Caco-2 (cell line): ENCODE measurements at regions of chr19 and their contacts with region 1.

Region 1: GRCh38 chr19:48391107-48391986 is at the start of gene KDELR1:
- DNase-seq: peak; percentile 75 to 86
- H3K4me3 ChIP-seq: peak within 1 kb of the TSS; percentile 70
- H3K4me3 Mint-ChIP-seq: peak within 1 kb of the TSS; percentile 80
- H3K27ac Mint-ChIP-seq: peak within 1 kb of the TSS; percentile 61
- H3K4me1 ChIP-seq: peaks cover 27% of the 10 kb centered on the region
- H3K4me1 Mint-ChIP-seq: peaks cover 33% of the 10 kb centered on the region
- H3K27me3 ChIP-seq: no peaks in the 10 kb centered on the region
- H3K27me3 Mint-ChIP-seq: no peaks in the 10 kb centered on the region
- CTCF ChIP-seq: peak; percentile 95 to 98
- total RNA-seq, gene KDELR1: 375 and 381 TPM in 2 replicates

Region 2: DNA sequence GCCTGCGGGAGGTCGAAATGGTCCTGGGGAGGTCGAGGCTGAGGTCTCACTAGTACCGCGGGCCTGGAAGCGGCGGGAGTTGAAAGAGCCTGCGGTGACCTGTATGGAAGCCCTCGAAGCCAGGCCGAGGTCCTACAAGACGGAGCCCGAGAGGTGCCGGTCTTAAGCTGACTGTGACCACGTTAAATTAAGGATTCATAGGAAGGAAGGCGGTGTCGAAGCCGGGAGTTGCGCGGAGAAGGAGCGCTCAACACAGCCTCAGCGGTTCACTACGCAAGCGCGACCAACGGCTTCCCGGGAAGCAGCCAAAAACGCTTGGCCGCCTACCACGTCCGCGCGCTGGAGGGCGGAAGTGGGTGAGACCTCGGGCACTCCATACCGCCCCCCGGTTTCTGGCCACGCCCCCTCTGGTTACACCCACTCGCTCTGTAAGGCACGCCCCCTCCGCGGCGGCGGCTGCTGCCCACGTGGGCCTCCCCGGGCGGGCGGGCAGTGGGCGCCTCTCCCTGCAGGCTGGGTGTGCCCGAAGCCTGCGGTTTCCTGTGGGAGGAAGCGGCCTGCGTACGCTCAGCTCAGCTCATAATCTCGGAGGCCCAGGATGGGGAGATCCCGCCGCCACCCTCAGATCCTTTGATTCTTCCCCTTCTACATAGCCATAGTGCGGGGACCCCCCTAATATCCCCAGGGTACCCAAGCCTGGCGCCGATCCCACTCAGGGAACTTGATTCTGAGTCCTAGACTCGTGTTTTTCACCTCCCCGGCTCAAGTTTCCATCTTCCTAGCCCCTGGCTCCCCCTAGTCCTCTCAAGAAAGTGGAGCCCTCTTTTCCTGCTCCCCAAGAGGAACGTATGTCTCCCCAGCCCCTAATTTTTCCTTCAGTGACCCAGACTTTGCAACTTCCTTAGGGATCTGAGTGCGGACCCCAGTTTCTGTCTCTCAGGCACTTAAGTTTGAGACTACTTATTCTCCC is 69.4 kb before region 1 on chr19:
- CTCF ChIA-PET with region 1: interaction called, 8 read pairs
- POLR2A ChIA-PET with region 1: no interaction called
- intact Hi-C with region 1: loop called (anchors 2 kb)
- DNase-seq: peak; percentile 98 to 99
- H3K4me3 ChIP-seq: peak overlapping the region; percentile 93
- H3K4me3 Mint-ChIP-seq: peak overlapping the region; percentile 96
- H3K27ac Mint-ChIP-seq: peak overlapping the region; percentile 95
- H3K4me1 ChIP-seq: peaks cover 25% of the 10 kb centered on the region
- H3K4me1 Mint-ChIP-seq: peaks cover 34% of the 10 kb centered on the region
- H3K27me3 ChIP-seq: no peaks in the 10 kb centered on the region
- H3K27me3 Mint-ChIP-seq: no peaks in the 10 kb centered on the region
- CTCF ChIP-seq: peak in 1 of 2 experiments; percentile 15

Region 3: DNA sequence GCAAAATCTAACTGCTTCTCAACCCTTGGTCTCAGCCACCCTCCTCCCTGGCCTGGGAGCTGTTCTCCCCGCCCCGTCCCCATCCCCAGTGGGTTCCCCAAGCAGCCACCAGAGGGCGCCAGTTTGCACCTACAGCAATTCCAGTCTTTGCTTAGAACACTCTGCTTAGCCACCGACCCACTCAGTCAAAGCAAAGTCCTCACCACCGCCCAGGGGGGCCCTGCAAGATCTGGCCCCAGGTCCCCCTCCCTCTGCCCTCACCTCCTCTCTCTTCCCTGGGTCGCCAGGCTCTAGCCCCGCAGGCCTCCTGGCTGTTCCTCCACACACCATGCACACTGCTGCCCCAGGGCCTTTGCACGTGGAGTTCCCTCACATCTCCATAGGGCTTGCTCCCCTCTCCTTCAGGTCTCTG is 40.0 kb before region 1 on chr19:
- CTCF ChIA-PET with region 1: interaction called, 10 read pairs
- POLR2A ChIA-PET with region 1: interaction called, 7 read pairs
- intact Hi-C with region 1: loop called (anchors 5 kb)
- DNase-seq: peak; percentile 81 to 85
- H3K4me3 ChIP-seq: no peak overlapping the region
- H3K4me3 Mint-ChIP-seq: no peak overlapping the region
- H3K27ac Mint-ChIP-seq: peak overlapping the region; percentile 43
- H3K4me1 ChIP-seq: peaks cover 33% of the 10 kb centered on the region
- H3K4me1 Mint-ChIP-seq: peaks cover 39% of the 10 kb centered on the region
- H3K27me3 ChIP-seq: no peaks in the 10 kb centered on the region
- H3K27me3 Mint-ChIP-seq: no peaks in the 10 kb centered on the region
- CTCF ChIP-seq: peak; percentile 82 to 90

Region 4: DNA sequence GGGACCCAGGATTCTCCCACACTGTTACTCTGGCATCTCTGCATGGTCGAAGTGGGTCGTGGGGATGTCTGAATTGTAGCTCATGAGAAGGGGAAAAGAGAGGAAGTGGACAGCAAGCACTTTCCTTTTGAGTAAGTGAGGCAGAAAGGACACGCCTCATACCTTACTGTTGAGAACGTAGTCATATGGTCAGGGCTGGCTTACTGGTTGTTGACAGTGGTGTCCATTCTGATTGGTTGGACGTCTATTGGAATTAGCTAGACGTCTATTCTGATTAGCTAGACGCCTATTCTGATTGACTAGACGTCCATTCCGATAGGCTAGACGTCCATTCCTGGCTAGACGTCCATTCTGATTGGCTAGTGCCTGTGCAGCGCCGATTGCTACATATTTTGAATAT is 14.5 kb after region 1 on chr19:
- CTCF ChIA-PET with region 1: interaction called, 10 read pairs
- POLR2A ChIA-PET with region 1: interaction called, 6 read pairs
- intact Hi-C with region 1: no loop called
- DNase-seq: peak; percentile 47 to 58
- H3K4me3 ChIP-seq: no peak overlapping the region
- H3K4me3 Mint-ChIP-seq: no peak overlapping the region
- H3K27ac Mint-ChIP-seq: peak overlapping the region; percentile 84
- H3K4me1 ChIP-seq: peaks cover 8% of the 10 kb centered on the region; the same call in 1 of the 2 replicates
- H3K4me1 Mint-ChIP-seq: peaks cover 17% of the 10 kb centered on the region
- H3K27me3 ChIP-seq: no peaks in the 10 kb centered on the region
- H3K27me3 Mint-ChIP-seq: no peaks in the 10 kb centered on the region
- CTCF ChIP-seq: no peak

Region 5: DNA sequence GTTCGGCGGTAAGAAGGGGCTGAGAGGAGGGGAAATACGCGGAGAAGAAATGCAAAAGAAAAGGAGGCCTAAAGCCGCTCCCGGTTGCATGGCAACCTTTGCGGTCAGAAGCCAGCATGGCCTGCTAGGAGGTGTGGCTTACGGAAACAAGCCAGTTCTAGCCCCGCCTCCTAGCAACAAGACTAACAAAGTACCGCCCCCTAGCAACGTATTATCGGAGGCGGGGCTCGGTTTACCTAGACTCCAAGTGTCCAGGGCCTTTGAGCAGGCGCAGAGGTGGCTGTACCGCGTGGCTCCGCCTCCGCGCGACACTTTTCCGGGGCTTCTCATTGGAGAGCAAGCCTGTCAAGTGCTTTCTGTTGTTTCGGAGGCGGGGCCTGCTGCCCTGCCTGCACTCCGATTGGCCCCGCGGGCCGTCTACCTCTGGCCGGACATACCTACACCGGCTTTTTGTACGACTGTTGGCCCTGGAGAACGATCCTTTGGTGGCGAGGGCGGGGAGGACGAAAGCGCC is 77.5 kb after region 1 on chr19:
- CTCF ChIA-PET with region 1: no interaction called
- POLR2A ChIA-PET with region 1: no interaction called
- intact Hi-C with region 1: loop called (anchors 5 kb)
- DNase-seq: peak; percentile 99 to 100
- H3K4me3 ChIP-seq: peak overlapping the region; percentile 65
- H3K4me3 Mint-ChIP-seq: peak overlapping the region; percentile 93
- H3K27ac Mint-ChIP-seq: peak overlapping the region; percentile 98
- H3K4me1 ChIP-seq: peaks cover 11% of the 10 kb centered on the region; the same call in 1 of the 2 replicates
- H3K4me1 Mint-ChIP-seq: peaks cover 7% of the 10 kb centered on the region
- H3K27me3 ChIP-seq: no peaks in the 10 kb centered on the region
- H3K27me3 Mint-ChIP-seq: no peaks in the 10 kb centered on the region
- CTCF ChIP-seq: no peak

Region 6: DNA sequence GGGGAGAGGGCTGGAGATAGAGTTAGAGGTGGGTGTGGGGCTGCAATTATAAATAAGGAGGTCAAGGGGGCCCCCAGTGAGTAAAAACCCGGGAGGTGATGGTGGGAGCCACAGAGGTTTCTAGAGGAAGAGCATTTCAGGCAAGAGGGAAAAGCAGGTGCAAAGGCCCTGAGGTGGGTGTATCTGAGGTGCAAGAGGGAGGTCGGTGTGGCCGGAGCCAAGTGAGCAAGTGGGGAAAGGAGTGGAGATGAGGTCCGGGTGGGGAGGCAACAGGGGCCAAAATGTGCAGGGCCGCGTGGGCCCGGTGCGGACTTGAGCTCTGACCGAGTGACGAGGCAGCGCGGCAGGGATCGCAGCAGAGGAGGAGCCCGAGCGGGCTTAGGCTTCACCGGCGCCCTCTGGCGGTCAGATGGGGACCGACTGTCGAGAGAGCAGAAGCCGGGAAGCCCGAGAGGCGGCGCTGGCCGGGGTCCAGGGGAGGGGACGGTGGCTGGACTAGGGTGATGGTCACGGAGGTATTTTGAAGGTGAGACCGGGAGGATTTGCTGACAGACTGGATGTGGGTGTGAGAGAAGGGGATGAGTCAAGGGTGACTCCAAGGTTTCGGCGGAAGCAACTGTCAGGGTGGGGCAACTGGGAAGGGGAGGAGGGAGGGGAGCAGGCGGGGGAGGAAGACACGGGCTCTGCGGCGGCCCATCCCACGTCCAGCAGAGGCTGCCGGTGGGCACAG is 197.5 kb after region 1 on chr19:
- CTCF ChIA-PET with region 1: interaction called, 12 read pairs
- POLR2A ChIA-PET with region 1: interaction called, 3 read pairs
- intact Hi-C with region 1: loop called (anchors 5 kb)
- DNase-seq: peak; percentile 89 to 93
- H3K4me3 ChIP-seq: peak overlapping the region; percentile 27
- H3K4me3 Mint-ChIP-seq: peak overlapping the region; percentile 79
- H3K27ac Mint-ChIP-seq: peak overlapping the region; percentile 74
- H3K4me1 ChIP-seq: peaks cover 3% of the 10 kb centered on the region
- H3K4me1 Mint-ChIP-seq: peaks cover 14% of the 10 kb centered on the region
- H3K27me3 ChIP-seq: no peaks in the 10 kb centered on the region
- H3K27me3 Mint-ChIP-seq: no peaks in the 10 kb centered on the region
- CTCF ChIP-seq: peak; percentile 95 to 97

Region 7: GRCh38 chr19:48734625-48735555 is 343.5 kb after region 1 on chr19:
- CTCF ChIA-PET with region 1: no interaction called
- POLR2A ChIA-PET with region 1: no interaction called
- intact Hi-C with region 1: no loop called
- DNase-seq: peak; percentile 85 to 86
- H3K4me3 ChIP-seq: peak overlapping the region; percentile 55
- H3K4me3 Mint-ChIP-seq: peak overlapping the region; percentile 85
- H3K27ac Mint-ChIP-seq: peak overlapping the region; percentile 73
- H3K4me1 ChIP-seq: peaks cover 9% of the 10 kb centered on the region
- H3K4me1 Mint-ChIP-seq: peaks cover 30% of the 10 kb centered on the region
- H3K27me3 ChIP-seq: no peaks in the 10 kb centered on the region
- H3K27me3 Mint-ChIP-seq: no peaks in the 10 kb centered on the region
- CTCF ChIP-seq: peak; percentile 22 to 41